Activated CD4-positive, alpha-beta T cell treated with anti-CD3 and anti-CD28 coated beads for 36 hours (primary cell): ENCODE measurements at regions of chr5 and their contacts with region 1.

Region 1: GRCh38 chr5:35852084-35852734 is 4.5 kb upstream of the IL7R start:
- DNase-seq: peak; percentile 74
- ATAC-seq: peak; percentile 43
- H3K4me3 Mint-ChIP-seq: peak overlapping the region; percentile 89
- H3K27ac Mint-ChIP-seq: peak overlapping the region; percentile 99
- H3K4me1 Mint-ChIP-seq: peaks cover 68% of the 10 kb centered on the region
- H3K27me3 Mint-ChIP-seq: no peaks in the 10 kb centered on the region

Region 2: DNA sequence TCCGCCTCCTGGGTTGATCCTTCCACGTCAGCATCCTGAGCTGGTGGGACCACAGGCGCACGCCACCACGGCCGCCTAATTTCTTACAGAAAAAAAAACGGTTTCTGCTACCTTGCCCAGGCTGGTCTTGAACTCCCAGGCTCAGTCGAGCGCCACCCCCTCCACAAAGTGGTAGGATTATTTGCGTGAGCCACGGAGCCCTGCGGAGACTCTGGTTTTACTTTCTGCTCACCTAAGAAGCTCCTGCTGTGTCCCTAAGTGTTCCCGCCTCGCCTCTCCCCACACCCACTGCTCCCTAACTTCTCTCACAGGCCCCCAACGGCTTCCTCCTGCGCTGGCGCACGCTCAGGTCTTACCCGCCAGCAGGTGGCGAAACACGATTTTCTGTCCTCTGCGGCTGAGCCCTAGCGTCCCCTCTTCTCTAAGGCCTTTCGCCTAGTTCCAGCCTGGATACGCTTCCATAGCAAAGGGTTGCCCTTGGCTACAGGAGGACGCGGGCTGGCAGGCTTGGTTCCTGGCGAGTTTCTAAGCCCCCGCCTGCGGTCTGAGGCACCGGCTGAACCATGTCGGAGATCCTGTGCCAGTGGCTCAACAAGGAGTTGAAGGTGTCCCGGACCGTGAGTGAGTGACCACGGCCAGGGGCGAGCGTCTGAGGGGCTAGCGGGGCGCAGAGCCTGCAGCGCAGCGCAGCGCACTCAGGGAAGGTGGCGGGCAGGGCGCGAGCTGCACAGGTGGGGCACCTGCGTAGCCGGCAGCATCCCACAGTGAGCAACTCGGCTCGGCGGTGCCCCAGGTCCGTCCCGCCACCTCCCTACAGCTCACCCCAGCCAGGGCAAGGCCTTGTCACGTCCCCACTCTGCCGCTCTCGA is 234.5 kb before region 1 on chr5 and contains the start of gene SPEF2:
- CTCF ChIA-PET with region 1: no interaction called
- POLR2A ChIA-PET with region 1: no interaction called
- intact Hi-C with region 1: loop called in 1 of 2 experiments (anchors 1 kb)
- DNase-seq: peak; percentile 91
- ATAC-seq: peak; percentile 92
- H3K4me3 Mint-ChIP-seq: peak within 1 kb of the TSS; percentile 83
- H3K27ac Mint-ChIP-seq: peak within 1 kb of the TSS; percentile 99
- H3K4me1 Mint-ChIP-seq: peaks cover 31% of the 10 kb centered on the region
- H3K27me3 Mint-ChIP-seq: no peaks in the 10 kb centered on the region
- total RNA-seq, gene SPEF2: 14.1 to 14.6 TPM

Region 3: DNA sequence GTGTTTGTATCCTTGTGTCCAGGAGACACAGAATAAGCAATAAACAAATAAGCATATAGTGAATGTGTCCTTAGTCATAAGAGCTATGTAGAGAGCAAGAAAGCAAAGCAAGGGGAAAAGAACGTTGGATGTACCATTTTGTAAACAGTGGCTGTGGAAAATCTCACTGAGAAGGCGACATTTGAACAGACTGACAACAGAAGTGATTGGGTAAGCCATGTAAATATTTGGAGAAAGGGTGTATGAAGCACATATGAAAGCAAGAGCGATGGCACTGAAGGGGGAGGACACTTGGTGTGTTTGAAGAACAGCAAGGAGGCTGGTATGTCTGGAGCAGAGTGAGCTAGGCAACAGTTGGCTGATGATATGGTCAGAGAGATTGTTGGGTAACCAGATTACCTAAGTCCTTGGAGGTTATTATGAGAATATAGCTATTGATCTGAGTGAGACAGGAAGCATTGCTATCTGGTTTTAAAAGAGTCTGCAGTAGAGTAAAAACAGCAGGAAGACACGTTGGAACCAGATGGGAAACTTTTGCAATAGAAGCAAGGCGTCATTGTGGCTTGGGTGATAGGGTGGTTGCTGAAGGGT is 111.0 kb before region 1 on chr5:
- CTCF ChIA-PET with region 1: no interaction called
- POLR2A ChIA-PET with region 1: no interaction called
- intact Hi-C with region 1: loop called (anchors 1 kb)
- DNase-seq: no peak
- ATAC-seq: peak; percentile 57
- H3K4me3 Mint-ChIP-seq: no peak overlapping the region
- H3K27ac Mint-ChIP-seq: peak overlapping the region; percentile 73
- H3K4me1 Mint-ChIP-seq: peaks cover 65% of the 10 kb centered on the region
- H3K27me3 Mint-ChIP-seq: no peaks in the 10 kb centered on the region

Region 4: DNA sequence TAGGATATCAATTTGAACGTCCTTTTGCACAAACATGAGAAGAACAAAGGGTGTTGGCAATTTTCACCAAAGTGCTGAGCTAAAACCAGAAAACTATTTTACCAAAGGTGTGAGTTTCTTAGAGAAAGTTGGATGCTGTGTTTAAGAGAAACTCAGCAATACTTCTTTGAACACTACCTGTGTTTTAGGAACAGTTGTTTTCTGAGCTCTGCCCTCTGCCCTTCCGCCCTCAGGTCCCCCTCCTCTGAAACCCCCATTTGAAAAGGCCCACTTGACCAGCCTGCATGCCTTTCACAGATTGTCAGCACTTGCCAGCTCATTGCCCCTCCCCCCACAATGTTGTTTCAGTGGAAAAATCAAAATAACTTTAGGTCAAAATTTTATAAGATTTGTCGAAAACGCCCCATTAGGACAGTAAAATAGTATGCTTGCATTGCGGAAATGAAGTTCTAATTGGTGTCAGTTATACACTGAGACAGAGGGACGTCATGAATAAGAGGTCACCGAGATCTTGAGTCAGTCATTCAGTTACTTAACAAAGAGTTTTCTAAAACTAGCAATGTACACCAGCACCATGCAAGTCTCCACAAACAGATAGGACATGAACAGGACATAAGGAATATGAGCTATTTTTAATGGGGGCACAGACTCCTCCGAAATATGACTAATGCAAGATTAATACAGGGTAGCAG is 57.4 kb before region 1 on chr5:
- CTCF ChIA-PET with region 1: interaction called, 6 read pairs
- POLR2A ChIA-PET with region 1: interaction called, 16 read pairs
- intact Hi-C with region 1: loop called (anchors 1 kb)
- DNase-seq: peak; percentile 45
- ATAC-seq: peak; percentile 40
- H3K4me3 Mint-ChIP-seq: peak overlapping the region; percentile 25
- H3K27ac Mint-ChIP-seq: peak overlapping the region; percentile 91
- H3K4me1 Mint-ChIP-seq: peaks cover 90% of the 10 kb centered on the region
- H3K27me3 Mint-ChIP-seq: no peaks in the 10 kb centered on the region

Region 5: DNA sequence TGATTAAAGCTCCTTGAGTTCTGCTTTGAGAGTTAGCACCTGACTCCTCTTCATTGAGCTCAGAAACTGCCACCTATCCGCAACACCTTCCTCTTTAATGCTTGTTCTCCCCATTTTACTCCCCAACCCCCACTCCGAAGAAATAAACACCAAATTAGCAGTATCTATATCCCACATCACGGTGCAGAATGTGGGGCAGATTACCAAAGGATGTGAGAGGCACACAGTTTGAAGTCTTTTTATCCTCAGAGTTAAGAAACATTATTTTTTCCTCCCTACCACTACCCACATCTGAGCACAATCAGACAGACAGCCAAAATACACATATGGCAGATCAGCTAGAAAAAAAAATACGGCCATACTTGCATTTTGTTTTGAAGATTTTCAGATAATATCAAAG is 21.6 kb before region 1 on chr5:
- CTCF ChIA-PET with region 1: interaction called, 12 read pairs
- POLR2A ChIA-PET with region 1: interaction called, 43 read pairs
- intact Hi-C with region 1: loop called in 1 of 2 experiments (anchors 1 kb)
- DNase-seq: no peak
- ATAC-seq: peak; percentile 8
- H3K4me3 Mint-ChIP-seq: peak overlapping the region; percentile 30
- H3K27ac Mint-ChIP-seq: peak overlapping the region; percentile 91
- H3K4me1 Mint-ChIP-seq: peaks cover 93% of the 10 kb centered on the region
- H3K27me3 Mint-ChIP-seq: no peaks in the 10 kb centered on the region

Region 6: GRCh38 chr5:35902046-35902676 is 50.0 kb after region 1 on chr5:
- CTCF ChIA-PET with region 1: interaction called, 3 read pairs
- POLR2A ChIA-PET with region 1: interaction called, 5 read pairs
- intact Hi-C with region 1: loop called (anchors 1 kb)
- DNase-seq: peak; percentile 42
- ATAC-seq: peak; percentile 60
- H3K4me3 Mint-ChIP-seq: peak overlapping the region; percentile 5
- H3K27ac Mint-ChIP-seq: peak overlapping the region; percentile 81
- H3K4me1 Mint-ChIP-seq: peaks cover 85% of the 10 kb centered on the region
- H3K27me3 Mint-ChIP-seq: no peaks in the 10 kb centered on the region

Region 7: GRCh38 chr5:36125868-36126267 is 273.7 kb after region 1 on chr5:
- CTCF ChIA-PET with region 1: no interaction called
- POLR2A ChIA-PET with region 1: no interaction called
- intact Hi-C with region 1: no loop called
- DNase-seq: no peak
- ATAC-seq: peak; percentile 30
- H3K4me3 Mint-ChIP-seq: no peak overlapping the region
- H3K27ac Mint-ChIP-seq: no peak overlapping the region
- H3K4me1 Mint-ChIP-seq: peaks cover 4% of the 10 kb centered on the region
- H3K27me3 Mint-ChIP-seq: no peaks in the 10 kb centered on the region